ENCODE measurements at regions of chr19 and their contacts with region 1.

Region 1: GRCh38 chr19:38831142-38831605 is 420 bp downstream of the ECH1 start:
- DNase-seq: no peak
- H3K4me3 Mint-ChIP-seq: peak overlapping the region; percentile 89
- H3K27ac Mint-ChIP-seq: peak overlapping the region; percentile 95
- H3K4me1 Mint-ChIP-seq: peaks cover 22% of the 10 kb centered on the region
- H3K27me3 Mint-ChIP-seq: no peaks in the 10 kb centered on the region

Region 2: GRCh38 chr19:37468961-37469777 is 1362.0 kb before region 1 on chr19 and contains the start of gene ZNF570:
- intact Hi-C with region 1: no loop called
- DNase-seq: peak; percentile 85
- H3K4me3 Mint-ChIP-seq: peak within 1 kb of the TSS; percentile 92
- H3K27ac Mint-ChIP-seq: peak within 1 kb of the TSS; percentile 93
- H3K4me1 Mint-ChIP-seq: peaks cover 27% of the 10 kb centered on the region
- H3K27me3 Mint-ChIP-seq: no peaks in the 10 kb centered on the region
- total RNA-seq, gene ZNF570: 2.1 and 2.8 TPM in 2 replicates

Region 3: DNA sequence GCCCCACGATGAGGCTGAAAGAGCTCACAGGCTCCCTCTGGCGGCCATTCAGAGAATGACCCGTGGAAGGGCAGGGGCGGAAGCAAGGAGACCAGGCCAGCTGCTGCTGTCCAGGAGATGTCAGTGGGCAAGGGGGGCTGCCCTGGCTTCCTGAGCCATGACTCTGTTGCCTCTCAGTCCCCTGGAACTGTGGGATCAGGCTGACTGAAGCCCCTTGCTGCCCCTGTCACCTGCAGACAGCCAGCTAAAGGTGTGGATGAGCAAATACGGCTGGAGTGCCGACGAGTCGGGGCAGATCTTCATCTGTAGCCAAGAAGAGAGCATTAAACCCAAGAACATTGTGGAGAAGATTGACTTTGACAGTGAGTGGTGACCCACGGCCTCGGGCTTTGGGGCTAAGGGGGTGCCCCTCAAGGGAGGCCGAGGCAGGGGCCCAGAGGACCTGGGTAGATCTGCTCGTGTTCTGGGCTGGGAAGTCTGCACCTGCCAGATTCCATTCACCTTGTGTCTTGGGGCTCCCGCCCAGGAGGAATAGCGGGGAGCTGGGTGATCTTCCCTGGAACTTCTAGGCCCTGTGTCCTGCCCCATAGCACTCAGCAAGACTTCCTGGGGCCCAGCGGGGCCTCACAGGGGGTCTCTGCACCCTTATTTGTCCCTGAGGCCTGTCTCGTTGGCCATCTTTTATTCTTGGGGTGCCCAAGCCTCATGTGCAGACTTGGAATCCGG is 196.3 kb before region 1 on chr19:
- intact Hi-C with region 1: loop called (anchors 1 kb)
- DNase-seq: peak; percentile 68
- H3K4me3 Mint-ChIP-seq: peak overlapping the region; percentile 43
- H3K27ac Mint-ChIP-seq: peak overlapping the region; percentile 83
- H3K4me1 Mint-ChIP-seq: peaks cover 36% of the 10 kb centered on the region
- H3K27me3 Mint-ChIP-seq: no peaks in the 10 kb centered on the region

Region 4: DNA sequence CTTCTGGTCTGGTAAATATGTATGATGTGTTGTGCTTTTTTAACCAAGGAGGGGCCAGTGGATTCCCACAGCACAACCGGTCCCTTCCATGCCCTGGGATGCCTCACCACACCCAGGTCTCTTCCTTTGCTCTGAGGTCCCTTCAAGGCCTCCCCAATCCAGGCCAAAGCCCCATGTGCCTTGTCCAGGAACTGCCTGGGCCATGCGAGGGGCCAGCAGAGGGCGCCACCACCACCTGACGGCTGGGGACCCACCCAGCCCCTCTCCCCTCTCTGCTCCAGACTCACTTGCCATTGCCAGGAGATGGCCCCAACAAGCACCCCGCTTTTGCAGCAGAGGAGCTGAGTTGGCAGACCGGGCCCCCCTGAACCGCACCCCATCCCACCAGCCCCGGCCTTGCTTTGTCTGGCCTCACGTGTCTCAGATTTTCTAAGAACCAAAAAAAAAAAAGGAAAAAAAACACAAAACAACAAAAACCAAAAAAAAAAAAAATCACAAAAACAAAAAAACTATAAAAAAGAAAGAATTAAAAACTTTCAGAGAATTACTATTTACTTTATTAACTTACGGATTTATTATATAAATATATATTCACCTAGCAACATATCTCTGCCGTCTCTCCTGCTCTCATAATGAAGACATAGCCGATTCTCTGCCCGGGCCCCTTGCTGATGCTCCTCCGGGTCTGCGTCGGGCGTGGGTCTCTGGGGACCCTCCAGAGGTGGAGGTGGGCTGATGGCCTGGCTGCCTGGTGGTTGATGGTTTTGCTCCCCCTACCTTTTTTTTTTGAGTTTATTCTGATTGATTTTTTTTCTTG is 101.3 kb before region 1 on chr19:
- intact Hi-C with region 1: loop called (anchors 2 kb)
- DNase-seq: peak; percentile 58
- H3K4me3 Mint-ChIP-seq: no peak overlapping the region
- H3K27ac Mint-ChIP-seq: peak overlapping the region; percentile 55
- H3K4me1 Mint-ChIP-seq: peaks cover 39% of the 10 kb centered on the region
- H3K27me3 Mint-ChIP-seq: no peaks in the 10 kb centered on the region

Region 5: GRCh38 chr19:38792250-38793111 is 38.7 kb before region 1 on chr19:
- intact Hi-C with region 1: loop called (anchors 5 kb)
- DNase-seq: no peak
- H3K4me3 Mint-ChIP-seq: no peak overlapping the region
- H3K27ac Mint-ChIP-seq: peak overlapping the region; percentile 16
- H3K4me1 Mint-ChIP-seq: peaks cover 5% of the 10 kb centered on the region
- H3K27me3 Mint-ChIP-seq: peaks cover 4% of the 10 kb centered on the region

Region 6: DNA sequence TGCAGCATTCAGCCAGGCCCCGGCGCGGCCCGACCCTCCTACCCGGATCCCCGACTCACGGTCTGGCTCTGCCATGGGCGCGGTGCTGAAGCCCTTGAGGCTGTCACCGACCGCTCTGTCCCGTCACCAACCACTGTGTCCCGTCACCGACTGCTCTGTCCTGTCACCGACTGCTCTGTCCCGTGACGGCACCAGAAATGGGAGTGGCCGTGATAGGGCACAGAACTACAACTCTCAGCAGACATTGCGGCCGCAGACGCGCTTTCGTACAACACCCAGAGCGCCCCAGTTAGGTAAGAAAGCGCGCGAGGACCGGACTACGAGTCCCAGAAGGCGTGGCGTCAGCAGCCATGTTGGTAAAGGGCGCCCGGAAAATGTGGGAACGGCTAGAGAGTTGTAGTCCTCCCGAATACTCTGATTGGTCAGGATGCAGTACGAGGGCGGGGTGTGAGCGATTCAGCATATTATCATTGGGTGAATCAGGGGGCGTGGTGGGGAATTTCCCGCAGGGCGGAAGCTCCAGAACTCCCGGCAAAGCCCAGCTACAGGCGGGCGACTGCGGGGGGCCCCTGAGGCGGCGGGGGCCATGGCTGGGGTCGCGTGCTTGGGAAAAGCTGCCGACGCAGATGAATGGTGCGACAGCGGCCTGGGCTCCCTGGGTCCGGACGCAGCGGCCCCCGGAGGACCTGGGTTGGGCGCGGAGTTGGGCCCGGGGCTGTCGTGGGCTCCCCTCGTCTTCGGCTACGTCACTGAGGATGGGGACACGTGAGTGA is 68.5 kb after region 1 on chr19 and contains the starts of genes NFKBIB and SIRT2:
- intact Hi-C with region 1: loop called (anchors 1 kb)
- DNase-seq: peak; percentile 100
- H3K4me3 Mint-ChIP-seq: peak within 1 kb of the TSS; percentile 93
- H3K27ac Mint-ChIP-seq: peak within 1 kb of the TSS; percentile 94
- H3K4me1 Mint-ChIP-seq: peaks cover 42% of the 10 kb centered on the region
- H3K27me3 Mint-ChIP-seq: no peaks in the 10 kb centered on the region
- total RNA-seq, gene NFKBIB: 98.1 and 102 TPM in 2 replicates
- total RNA-seq, gene SIRT2: 28.3 and 28.7 TPM in 2 replicates

Region 7: GRCh38 chr19:38917516-38918491 is 86.6 kb after region 1 on chr19:
- intact Hi-C with region 1: no loop called
- DNase-seq: no peak
- H3K4me3 Mint-ChIP-seq: no peak overlapping the region
- H3K27ac Mint-ChIP-seq: no peak overlapping the region
- H3K4me1 Mint-ChIP-seq: peaks cover 5% of the 10 kb centered on the region
- H3K27me3 Mint-ChIP-seq: no peaks in the 10 kb centered on the region

Measured in activated T-helper 1 cell treated with anti-CD3 and anti-CD28 coated beads, Interleukin-12 subunit alpha, Interleukin-12 subunit beta, Interleukin-2, Interleukin-4 antibody, amounts not matched to agents 30 ng/mL and 10 ng/mL and 1 ng/mL, durations not matched to agents 14 hours and 24 hours and 36 hours (primary cell).